Vagina (tissue), 2 donors: ENCODE measurements at regions of chr2 and their contacts with region 1.

Region 1: DNA sequence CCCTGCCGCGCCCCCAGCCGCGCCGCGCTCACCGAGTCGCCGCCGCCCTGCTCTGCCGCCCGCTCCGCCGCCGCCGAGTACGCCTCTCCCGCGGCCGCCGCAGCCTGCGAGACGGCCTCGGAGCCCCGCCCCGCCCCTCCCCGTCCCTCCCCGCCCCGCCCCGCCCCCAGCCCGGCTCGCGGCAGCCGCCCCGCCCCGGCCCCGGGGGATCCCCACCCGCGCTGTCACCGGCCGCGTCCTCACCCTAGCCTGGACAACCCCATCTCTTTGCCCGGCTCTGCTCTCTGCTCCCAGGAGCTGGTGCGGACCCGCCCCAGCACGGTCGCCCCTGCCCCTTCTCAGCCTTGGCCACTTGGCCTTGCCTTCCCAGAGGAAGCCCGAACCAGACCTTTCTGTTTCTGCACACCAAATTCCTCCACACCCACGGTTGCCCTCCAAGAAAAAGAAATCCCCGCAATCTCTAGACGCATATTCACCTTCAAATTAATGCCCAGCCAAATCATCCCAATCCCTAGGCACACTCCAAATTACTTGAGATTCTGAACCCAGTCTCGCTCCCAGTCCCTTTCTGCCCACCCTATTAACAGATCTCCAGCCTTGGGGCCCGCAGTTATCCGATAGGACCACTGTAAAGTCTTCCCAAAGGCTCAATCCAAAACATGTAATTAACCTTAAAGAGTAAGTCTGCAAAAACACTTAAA is at the start of gene CYRIA:
- DNase-seq: peak in 1 of 2 donors; percentile 86
- H3K4me3 ChIP-seq: peak within 1 kb of the TSS; percentile 73 to 84
- H3K27ac ChIP-seq: peak within 1 kb of the TSS; percentile 86
- H3K4me1 ChIP-seq: peaks cover 47% of the 10 kb centered on the region
- H3K27me3 ChIP-seq: no peaks in the 10 kb centered on the region
- CTCF ChIP-seq: no peak
- POLR2A ChIP-seq: no peak
- total RNA-seq, gene CYRIA: 12.5 TPM

Region 2: GRCh38 chr2:16617282-16618261 is 48.3 kb before region 1 on chr2:
- intact Hi-C with region 1: loop called (anchors 5 kb)
- DNase-seq: no peak
- H3K4me3 ChIP-seq: no peak overlapping the region
- H3K27ac ChIP-seq: no peak overlapping the region
- H3K4me1 ChIP-seq: peaks cover 45% of the 10 kb centered on the region
- H3K27me3 ChIP-seq: no peaks in the 10 kb centered on the region
- CTCF ChIP-seq: peak in 1 of 3 experiments; percentile 36
- POLR2A ChIP-seq: no peak

Region 3: DNA sequence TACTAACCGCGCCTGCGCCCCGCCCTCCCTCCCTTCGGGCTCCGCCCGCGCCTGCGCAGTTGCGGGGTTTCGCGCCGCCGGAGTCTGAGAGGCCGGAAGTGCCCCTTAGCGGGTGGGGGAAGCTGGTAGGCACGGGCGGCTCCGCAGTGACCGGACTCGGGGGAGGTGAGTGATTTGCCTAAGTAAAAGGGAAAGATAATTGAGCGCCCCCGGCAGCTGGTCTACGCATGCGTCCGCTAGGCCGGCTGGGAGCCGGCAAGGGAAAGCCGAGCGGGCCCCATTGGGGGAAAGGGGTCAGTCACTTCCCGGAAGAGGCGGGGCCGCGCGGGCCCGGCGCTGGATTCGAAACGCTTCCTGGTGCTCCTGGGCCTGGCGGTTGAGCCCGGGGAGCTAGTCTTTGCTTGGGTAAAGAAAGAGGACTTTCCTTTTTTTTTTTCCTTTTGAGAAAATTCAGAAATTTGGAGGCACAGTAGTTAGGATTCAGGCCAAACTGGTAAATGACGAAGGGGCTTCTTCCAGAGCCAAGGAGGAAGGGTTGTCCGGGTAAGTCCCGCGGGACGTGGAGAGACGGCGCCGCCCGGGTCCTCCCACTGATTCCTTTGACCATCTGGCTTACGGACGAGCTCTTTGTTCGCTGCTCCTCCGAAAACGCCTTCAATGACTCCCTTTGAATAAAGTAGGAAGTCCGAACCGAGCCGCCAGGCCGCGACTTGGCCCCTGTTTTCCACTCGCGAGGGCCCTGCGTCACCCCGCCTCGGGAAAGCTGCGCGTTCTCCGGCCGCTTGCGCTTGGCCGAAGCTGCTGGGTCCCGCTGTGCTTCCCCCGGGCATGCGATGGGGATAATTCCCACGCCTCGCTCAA is 1088.1 kb after region 1 on chr2 and contains the starts of genes GEN1 and SMC6:
- intact Hi-C with region 1: loop called (anchors 10 kb)
- DNase-seq: peak; percentile 93 to 96
- H3K4me3 ChIP-seq: peak within 1 kb of the TSS; percentile 75 to 96
- H3K27ac ChIP-seq: peak within 1 kb of the TSS; percentile 95
- H3K4me1 ChIP-seq: peaks cover 25% of the 10 kb centered on the region
- H3K27me3 ChIP-seq: no peaks in the 10 kb centered on the region
- CTCF ChIP-seq: peak in 1 of 3 experiments; percentile 8
- POLR2A ChIP-seq: no peak
- total RNA-seq, gene GEN1: 9.6 TPM
- total RNA-seq, gene SMC6: 33.6 TPM